HCT116 (cell line): ENCODE measurements at regions of chr17 and their contacts with region 1.

Region 1: DNA sequence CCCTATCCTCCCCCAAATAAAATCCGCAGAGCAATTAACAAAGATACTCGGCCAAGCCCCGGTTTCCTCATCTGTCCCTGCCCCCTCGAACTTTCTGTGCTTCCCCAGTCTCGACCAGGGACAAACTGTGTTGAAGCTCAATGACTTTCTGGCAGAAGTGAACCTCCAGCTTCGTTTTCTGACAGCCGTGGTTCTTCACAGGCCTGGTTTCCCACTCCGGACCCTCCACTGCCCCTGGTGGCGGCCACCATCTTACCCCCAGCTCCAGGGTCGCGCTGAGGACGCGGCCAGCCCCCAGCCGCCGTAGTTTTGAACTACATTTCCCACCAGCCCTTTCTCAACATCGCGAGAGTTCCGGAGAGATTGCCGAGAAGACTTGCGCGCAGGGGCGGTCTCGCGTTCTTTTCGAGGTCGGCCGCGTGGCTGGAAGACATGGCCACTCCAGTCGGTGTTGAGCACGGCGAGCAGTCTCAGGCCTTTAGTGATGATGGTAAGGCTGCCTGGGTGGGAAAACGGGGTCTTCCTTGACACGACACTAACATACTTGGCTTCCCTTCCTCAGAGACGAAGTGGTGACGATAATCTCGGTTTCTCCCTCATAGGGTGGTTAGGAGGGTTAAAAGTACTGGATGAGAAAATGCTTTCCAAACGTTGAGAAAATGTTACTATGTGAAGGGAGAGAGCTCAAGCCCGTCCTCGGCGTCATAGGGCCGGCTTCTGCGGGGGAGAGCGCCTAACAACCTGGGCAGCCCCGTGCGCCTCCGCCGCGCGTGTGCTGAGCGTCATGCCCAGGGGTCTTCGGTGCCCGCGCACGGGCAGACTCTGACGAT is 17.7 kb downstream of the PRCD start:
- DNase-seq: peak; percentile 98
- ATAC-seq: peak; percentile 90
- H3K4me3 ChIP-seq: peak overlapping the region; percentile 94 to 96
- H3K27ac ChIP-seq: peak overlapping the region; percentile 87
- H3K4me1 ChIP-seq: peaks cover 12 to 41% of the 10 kb centered on the region in 2 experiments; a peak in 3 of 4 replicates
- H3K27me3 ChIP-seq: no peaks in the 10 kb centered on the region
- CTCF ChIP-seq: peak in 2 of 3 experiments; percentile 68; a peak in 4 of 6 replicates
- POLR2A ChIP-seq: peak; percentile 97
- RAD21 ChIP-seq: no peak

Region 2: GRCh38 chr17:76467366-76467765 is 90.2 kb before region 1 on chr17 and contains the start of gene AANAT:
- CTCF ChIA-PET with region 1: no interaction called
- POLR2A ChIA-PET with region 1: no interaction called
- RAD21 ChIA-PET with region 1: no interaction called
- intact Hi-C with region 1: no loop called
- DNase-seq: no peak
- ATAC-seq: no peak
- H3K4me3 ChIP-seq: no peak within 1 kb of the TSS
- H3K27ac ChIP-seq: no peak within 1 kb of the TSS; the same call in 1 of the 2 replicates
- H3K4me1 ChIP-seq: peaks cover 0 to 10% of the 10 kb centered on the region in 2 experiments; a peak in 2 of 4 replicates
- H3K27me3 ChIP-seq: no peaks in the 10 kb centered on the region
- CTCF ChIP-seq: no peak
- POLR2A ChIP-seq: no peak
- RAD21 ChIP-seq: no peak
- total RNA-seq, gene AANAT: not detected

Region 3: DNA sequence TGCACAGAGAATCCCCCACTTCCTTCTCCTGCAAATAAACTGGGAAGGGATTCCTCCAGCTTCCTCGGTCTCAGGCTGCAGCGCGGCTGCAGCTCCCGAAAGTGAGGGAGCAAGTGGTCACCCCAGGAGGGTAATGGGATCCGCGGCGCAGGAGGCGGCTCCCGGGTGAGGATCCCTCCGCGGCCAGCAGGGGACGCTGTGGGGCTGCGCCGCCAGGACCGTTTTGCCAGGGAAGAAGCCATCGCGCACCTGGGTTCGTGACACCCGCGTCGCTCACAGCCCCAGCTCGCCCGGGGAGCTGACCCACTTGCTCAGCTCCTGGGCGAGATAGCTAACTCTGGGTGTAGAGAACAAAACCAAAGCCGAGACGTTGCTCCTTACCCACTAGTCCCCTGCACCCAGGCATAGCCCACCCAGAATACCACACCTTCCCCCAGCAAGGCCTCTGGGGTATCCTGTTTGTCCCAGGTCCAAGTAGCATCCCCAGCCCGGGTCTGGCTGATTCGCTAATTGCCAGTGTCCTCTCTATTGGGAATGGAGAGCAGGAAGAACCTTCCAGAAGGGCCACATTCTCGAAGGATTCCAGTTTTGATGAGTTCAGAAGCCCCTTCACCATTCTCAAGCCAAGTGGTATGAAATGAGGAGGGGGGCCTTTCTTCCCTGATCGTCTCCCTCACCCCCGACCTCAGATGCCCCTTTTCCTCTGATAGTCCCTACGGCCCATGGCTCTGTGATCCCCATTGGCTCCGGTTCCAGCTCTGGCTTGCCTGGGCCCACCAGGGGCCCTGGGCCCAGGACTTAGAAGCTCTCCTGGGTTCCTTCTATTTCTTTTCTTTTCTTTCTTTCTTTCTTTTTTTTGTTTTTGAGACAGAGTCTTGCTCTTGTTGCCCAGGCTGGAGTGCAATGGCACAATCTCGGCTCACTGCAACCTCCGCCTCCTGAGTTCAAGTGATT is 34.2 kb before region 1 on chr17:
- CTCF ChIA-PET with region 1: interaction called, 14 read pairs
- POLR2A ChIA-PET with region 1: interaction called, 9 read pairs
- RAD21 ChIA-PET with region 1: no interaction called
- intact Hi-C with region 1: no loop called
- DNase-seq: peak; percentile 58
- ATAC-seq: peak; percentile 97
- H3K4me3 ChIP-seq: peak overlapping the region; percentile 1 to 19; a peak in 3 of 4 replicates
- H3K27ac ChIP-seq: no peak overlapping the region
- H3K4me1 ChIP-seq: peaks cover 0 to 20% of the 10 kb centered on the region in 2 experiments; a peak in 3 of 4 replicates
- H3K27me3 ChIP-seq: no peaks in the 10 kb centered on the region
- CTCF ChIP-seq: peak; percentile 97 to 100 (median 100)
- POLR2A ChIP-seq: peak; percentile 28
- RAD21 ChIP-seq: peak; percentile 100

Region 4: GRCh38 chr17:76547184-76547641 is 10.4 kb before region 1 on chr17:
- CTCF ChIA-PET with region 1: interaction called, 13 read pairs
- POLR2A ChIA-PET with region 1: interaction called, 4 read pairs
- RAD21 ChIA-PET with region 1: no interaction called
- intact Hi-C with region 1: no loop called
- DNase-seq: no peak
- ATAC-seq: peak; percentile 96
- H3K4me3 ChIP-seq: no peak overlapping the region
- H3K27ac ChIP-seq: no peak overlapping the region
- H3K4me1 ChIP-seq: peaks cover 0 to 13% of the 10 kb centered on the region in 2 experiments; a peak in 2 of 4 replicates
- H3K27me3 ChIP-seq: no peaks in the 10 kb centered on the region
- CTCF ChIP-seq: peak; percentile 80 to 92 (median 90)
- POLR2A ChIP-seq: no peak
- RAD21 ChIP-seq: peak; percentile 92

Region 5: GRCh38 chr17:76585818-76586593 is 28.4 kb after region 1 on chr17 and contains the start of gene ST6GALNAC2:
- CTCF ChIA-PET with region 1: interaction called, 4 read pairs
- POLR2A ChIA-PET with region 1: interaction called, 10 read pairs
- RAD21 ChIA-PET with region 1: no interaction called
- intact Hi-C with region 1: no loop called
- DNase-seq: peak; percentile 42
- ATAC-seq: peak; percentile 89
- H3K4me3 ChIP-seq: peak within 1 kb of the TSS; percentile 68 to 87
- H3K27ac ChIP-seq: peak within 1 kb of the TSS; percentile 80
- H3K4me1 ChIP-seq: peaks cover 17 to 40% of the 10 kb centered on the region in 2 experiments
- H3K27me3 ChIP-seq: no peaks in the 10 kb centered on the region
- CTCF ChIP-seq: peak in 2 of 3 experiments; percentile 12 to 23; a peak in 1 of 6 replicates
- POLR2A ChIP-seq: no peak
- RAD21 ChIP-seq: peak; percentile 59
- total RNA-seq, gene ST6GALNAC2: 14.7 TPM

Region 6: GRCh38 chr17:76623271-76624146 is 65.9 kb after region 1 on chr17:
- CTCF ChIA-PET with region 1: interaction called, 31 read pairs
- POLR2A ChIA-PET with region 1: interaction called, 8 read pairs
- RAD21 ChIA-PET with region 1: interaction called in 1 of 2 experiments, 8 read pairs
- intact Hi-C with region 1: loop called (anchors 1 kb)
- DNase-seq: peak; percentile 63
- ATAC-seq: peak; percentile 99
- H3K4me3 ChIP-seq: peak overlapping the region; percentile 38 to 47
- H3K27ac ChIP-seq: peak overlapping the region; percentile 1; the same call in 1 of the 2 replicates
- H3K4me1 ChIP-seq: peaks cover 9 to 12% of the 10 kb centered on the region in 2 experiments
- H3K27me3 ChIP-seq: no peaks in the 10 kb centered on the region
- CTCF ChIP-seq: peak; percentile 93 to 99 (median 97)
- POLR2A ChIP-seq: no peak
- RAD21 ChIP-seq: peak; percentile 95

Region 7: GRCh38 chr17:76909971-76910760 is 352.6 kb after region 1 on chr17:
- CTCF ChIA-PET with region 1: no interaction called
- POLR2A ChIA-PET with region 1: no interaction called
- RAD21 ChIA-PET with region 1: no interaction called
- intact Hi-C with region 1: no loop called
- DNase-seq: peak; percentile 7
- ATAC-seq: peak; percentile 79
- H3K4me3 ChIP-seq: no peak overlapping the region
- H3K27ac ChIP-seq: no peak overlapping the region
- H3K4me1 ChIP-seq: no peaks in the 10 kb centered on the region
- H3K27me3 ChIP-seq: peaks cover 5% of the 10 kb centered on the region; the same call in 1 of the 2 replicates
- CTCF ChIP-seq: no peak
- POLR2A ChIP-seq: no peak
- RAD21 ChIP-seq: no peak